ENCODE measurements at regions of chr6 and their contacts with region 1.

Region 1: DNA sequence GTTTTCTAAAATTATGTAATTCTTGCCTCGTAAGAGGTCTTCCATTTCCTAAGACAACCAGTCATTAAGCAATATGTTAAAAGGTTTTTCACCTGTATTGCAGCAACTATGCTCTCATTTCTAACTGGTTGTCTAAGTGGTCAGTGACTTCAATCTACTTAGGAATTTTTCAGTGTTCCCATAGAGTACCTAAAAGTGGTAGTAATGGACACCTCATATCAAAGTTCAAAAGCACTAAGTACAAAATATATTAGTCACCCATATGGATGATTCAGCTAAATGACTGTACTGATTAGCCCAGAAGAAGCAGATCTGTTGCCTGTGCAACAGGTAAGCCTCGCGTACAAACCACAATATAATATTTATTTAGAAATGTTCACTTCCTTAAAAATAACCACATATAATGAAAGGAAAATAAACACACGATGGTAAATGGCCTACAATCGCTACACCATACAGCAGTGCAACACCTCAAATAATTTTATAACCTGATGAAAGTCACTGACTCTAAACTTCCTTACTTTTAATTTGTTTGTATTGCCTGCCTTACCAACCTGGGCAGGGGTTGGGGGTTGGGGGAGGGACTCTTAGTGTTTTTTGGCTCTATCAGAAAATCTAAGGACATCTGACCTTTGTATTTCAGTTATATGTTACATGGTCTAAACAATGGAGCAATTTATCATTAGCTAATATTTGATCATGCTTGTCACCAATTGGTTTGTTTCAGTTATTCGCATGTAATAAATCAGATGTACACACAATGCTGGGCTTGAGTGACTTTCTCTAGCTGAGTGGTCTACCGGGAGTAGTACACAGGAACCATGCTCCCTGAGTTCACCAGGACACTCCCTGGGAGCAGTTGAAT is 105.9 kb downstream of the HIVEP2 start:
- DNase-seq: no peak
- ATAC-seq: no peak
- H3K4me3 ChIP-seq: peak overlapping the region; percentile 7
- H3K4me3 Mint-ChIP-seq: peak overlapping the region in 9 of 10 donors; percentile 31 to 65 (median 46)
- H3K27ac ChIP-seq: no peak overlapping the region
- H3K27ac Mint-ChIP-seq: peak overlapping the region; percentile 33 to 91 (median 65)
- H3K4me1 ChIP-seq: peaks cover 40 to 47% of the 10 kb centered on the region in 2 donors
- H3K4me1 Mint-ChIP-seq: peaks cover 35 to 95% (median 80%) of the 10 kb centered on the region in 7 donors
- H3K27me3 ChIP-seq: no peaks in the 10 kb centered on the region
- H3K27me3 Mint-ChIP-seq: no peaks in the 10 kb centered on the region

Region 2: GRCh38 chr6:142617158-142617557 is 221.9 kb before region 1 on chr6:
- CTCF ChIA-PET with region 1: no interaction called
- POLR2A ChIA-PET with region 1: no interaction called
- intact Hi-C with region 1: no loop called
- DNase-seq: no peak
- ATAC-seq: no peak
- H3K4me3 ChIP-seq: no peak overlapping the region
- H3K4me3 Mint-ChIP-seq: no peak overlapping the region
- H3K27ac ChIP-seq: no peak overlapping the region
- H3K27ac Mint-ChIP-seq: no peak overlapping the region
- H3K4me1 ChIP-seq: no peaks in the 10 kb centered on the region
- H3K4me1 Mint-ChIP-seq: peaks cover 0 to 4% (median 0%) of the 10 kb centered on the region in 7 donors
- H3K27me3 ChIP-seq: no peaks in the 10 kb centered on the region
- H3K27me3 Mint-ChIP-seq: no peaks in the 10 kb centered on the region

Region 3: DNA sequence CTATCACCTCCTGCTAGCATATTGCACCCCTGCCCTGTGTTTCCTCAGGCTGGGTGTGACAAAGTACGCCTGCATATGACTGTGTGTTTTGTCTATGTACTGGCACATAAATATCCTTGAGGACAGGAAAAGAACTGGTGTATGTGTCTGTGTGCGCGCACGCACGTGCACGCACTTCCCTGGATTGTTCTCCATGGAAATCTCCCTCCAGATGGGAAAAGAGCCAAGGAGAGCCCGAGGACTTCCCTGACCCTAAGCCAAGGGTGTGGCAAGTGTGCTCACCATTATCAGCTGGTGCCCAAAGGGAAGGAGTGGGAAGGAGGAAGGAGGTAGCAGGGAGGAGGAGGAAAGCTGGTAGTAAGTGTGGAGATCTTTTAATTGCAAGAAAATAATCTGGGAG is 11.7 kb before region 1 on chr6:
- CTCF ChIA-PET with region 1: interaction called, 5 read pairs
- POLR2A ChIA-PET with region 1: interaction called, 71 read pairs
- intact Hi-C with region 1: loop called (anchors 1 kb)
- DNase-seq: no peak
- ATAC-seq: no peak
- H3K4me3 ChIP-seq: no peak overlapping the region
- H3K4me3 Mint-ChIP-seq: no peak overlapping the region
- H3K27ac ChIP-seq: no peak overlapping the region
- H3K27ac Mint-ChIP-seq: peak overlapping the region in 7 of 9 donors; percentile 32 to 85 (median 75)
- H3K4me1 ChIP-seq: peaks cover 8 to 18% of the 10 kb centered on the region in 2 donors
- H3K4me1 Mint-ChIP-seq: peaks cover 33 to 90% (median 82%) of the 10 kb centered on the region in 7 donors
- H3K27me3 ChIP-seq: no peaks in the 10 kb centered on the region
- H3K27me3 Mint-ChIP-seq: no peaks in the 10 kb centered on the region